HEK293 (cell line): ENCODE measurements at regions of chr1 and their contacts with region 1.

Region 1: GRCh38 chr1:206797534-206798383 is 25.5 kb upstream of the IL10 start:
- H3K4me3 ChIP-seq: no peak overlapping the region
- H3K27ac ChIP-seq: no peak overlapping the region
- H3K4me1 ChIP-seq: no peaks in the 10 kb centered on the region
- CTCF ChIP-seq: peak; percentile 35; the same call in 1 of the 2 replicates

Region 2: DNA sequence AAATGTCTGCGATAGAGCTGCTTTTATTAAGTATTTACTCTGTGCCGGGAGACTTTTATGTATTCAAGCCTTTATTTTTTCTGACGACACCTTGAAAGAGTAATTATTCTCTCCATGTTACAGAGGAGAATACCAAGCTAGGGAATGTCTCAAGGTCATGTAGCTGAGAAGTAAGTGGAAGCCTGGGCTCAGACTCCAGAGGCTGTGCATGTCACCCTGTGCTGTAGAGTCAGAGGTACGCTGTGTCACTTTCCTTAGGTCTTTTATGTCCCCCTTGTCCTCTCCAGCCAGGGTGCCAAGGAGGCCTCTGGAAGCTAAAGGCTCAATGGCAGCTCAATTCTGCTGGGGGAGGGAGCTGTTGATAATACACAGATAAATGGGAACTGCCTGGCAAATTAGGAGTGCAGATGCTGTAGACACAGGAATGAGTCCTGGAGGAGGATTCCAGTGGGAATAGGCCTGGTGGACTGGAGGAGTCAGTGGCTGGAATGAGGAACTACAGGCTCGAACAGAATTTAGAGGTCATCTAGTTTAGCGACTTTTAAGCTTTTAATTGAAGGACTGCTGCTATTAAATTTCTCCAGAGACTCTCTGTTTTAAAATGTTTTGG is 36.5 kb before region 1 on chr1:
- CTCF ChIA-PET with region 1: interaction called, 10 read pairs
- POLR2A ChIA-PET with region 1: no interaction called
- H3K4me3 ChIP-seq: no peak overlapping the region
- H3K27ac ChIP-seq: no peak overlapping the region
- H3K4me1 ChIP-seq: no peaks in the 10 kb centered on the region
- CTCF ChIP-seq: no peak

Region 3: DNA sequence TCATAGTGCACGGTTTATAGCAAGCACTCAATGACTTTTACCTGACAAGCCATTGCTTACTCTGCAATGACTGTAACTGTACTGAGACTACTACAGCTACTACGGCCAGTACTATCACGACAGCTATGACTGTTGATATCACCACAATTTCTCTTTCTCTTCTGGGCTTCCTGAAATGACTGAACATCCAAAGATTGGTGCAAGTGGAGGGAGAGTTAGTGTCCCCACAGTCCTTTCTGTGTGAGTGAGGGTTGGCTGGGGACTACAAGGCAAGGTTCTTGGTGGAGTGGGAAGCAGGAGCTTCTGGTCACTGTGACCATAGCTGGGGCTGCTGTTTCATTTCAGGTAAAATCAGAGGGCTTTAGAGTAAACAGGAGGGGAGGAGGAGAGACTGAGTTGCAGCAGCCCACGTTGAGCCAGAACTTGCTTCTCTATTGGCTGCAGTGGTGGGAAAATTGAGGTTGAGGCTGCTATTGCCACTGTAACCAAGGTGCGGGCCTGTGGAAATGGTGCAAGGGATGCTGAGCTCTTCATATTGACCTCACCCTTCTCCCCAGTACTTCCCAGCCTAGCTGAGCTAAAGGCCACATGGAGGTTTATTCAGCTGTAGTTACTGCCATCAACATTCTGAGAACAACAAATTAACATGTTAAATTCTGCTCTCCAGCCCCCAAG is 11.4 kb before region 1 on chr1:
- CTCF ChIA-PET with region 1: interaction called, 14 read pairs
- POLR2A ChIA-PET with region 1: no interaction called
- H3K4me3 ChIP-seq: no peak overlapping the region
- H3K27ac ChIP-seq: no peak overlapping the region
- H3K4me1 ChIP-seq: no peaks in the 10 kb centered on the region
- CTCF ChIP-seq: no peak

Region 4: GRCh38 chr1:206808615-206809014 is 10.9 kb after region 1 on chr1:
- CTCF ChIA-PET with region 1: interaction called, 10 read pairs
- POLR2A ChIA-PET with region 1: no interaction called
- H3K4me3 ChIP-seq: no peak overlapping the region
- H3K27ac ChIP-seq: no peak overlapping the region
- H3K4me1 ChIP-seq: no peaks in the 10 kb centered on the region
- CTCF ChIP-seq: no peak; the same call in 1 of the 2 replicates

Region 5: GRCh38 chr1:206875752-206876380 is 78.1 kb after region 1 on chr1:
- CTCF ChIA-PET with region 1: no interaction called
- POLR2A ChIA-PET with region 1: no interaction called
- H3K4me3 ChIP-seq: no peak overlapping the region
- H3K27ac ChIP-seq: no peak overlapping the region
- H3K4me1 ChIP-seq: no peaks in the 10 kb centered on the region
- CTCF ChIP-seq: no peak

Region 6: DNA sequence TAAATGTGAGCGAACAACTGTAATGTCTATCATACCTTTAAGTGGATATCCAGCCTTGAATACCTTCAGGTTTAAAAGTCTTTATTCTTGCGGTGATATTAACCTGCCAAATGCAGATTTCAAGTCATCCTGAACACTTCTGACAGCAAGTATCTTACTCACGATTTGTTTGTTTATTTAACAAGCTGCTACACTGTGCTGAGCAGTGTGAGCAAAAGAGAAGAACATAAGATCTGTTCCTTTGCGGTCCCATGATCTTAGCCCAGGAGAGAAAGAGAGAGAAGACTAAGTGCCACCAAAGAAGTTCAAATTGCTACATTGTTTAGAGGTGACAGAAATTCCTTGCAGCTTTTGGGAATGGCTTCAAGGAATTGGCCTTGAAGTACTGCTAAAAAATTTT is 89.9 kb after region 1 on chr1:
- CTCF ChIA-PET with region 1: no interaction called
- POLR2A ChIA-PET with region 1: no interaction called
- H3K4me3 ChIP-seq: no peak overlapping the region
- H3K27ac ChIP-seq: no peak overlapping the region
- H3K4me1 ChIP-seq: no peaks in the 10 kb centered on the region
- CTCF ChIP-seq: no peak